WTC11 (cell line): ENCODE measurements at regions of chr1 and their contacts with region 1.

Region 1: DNA sequence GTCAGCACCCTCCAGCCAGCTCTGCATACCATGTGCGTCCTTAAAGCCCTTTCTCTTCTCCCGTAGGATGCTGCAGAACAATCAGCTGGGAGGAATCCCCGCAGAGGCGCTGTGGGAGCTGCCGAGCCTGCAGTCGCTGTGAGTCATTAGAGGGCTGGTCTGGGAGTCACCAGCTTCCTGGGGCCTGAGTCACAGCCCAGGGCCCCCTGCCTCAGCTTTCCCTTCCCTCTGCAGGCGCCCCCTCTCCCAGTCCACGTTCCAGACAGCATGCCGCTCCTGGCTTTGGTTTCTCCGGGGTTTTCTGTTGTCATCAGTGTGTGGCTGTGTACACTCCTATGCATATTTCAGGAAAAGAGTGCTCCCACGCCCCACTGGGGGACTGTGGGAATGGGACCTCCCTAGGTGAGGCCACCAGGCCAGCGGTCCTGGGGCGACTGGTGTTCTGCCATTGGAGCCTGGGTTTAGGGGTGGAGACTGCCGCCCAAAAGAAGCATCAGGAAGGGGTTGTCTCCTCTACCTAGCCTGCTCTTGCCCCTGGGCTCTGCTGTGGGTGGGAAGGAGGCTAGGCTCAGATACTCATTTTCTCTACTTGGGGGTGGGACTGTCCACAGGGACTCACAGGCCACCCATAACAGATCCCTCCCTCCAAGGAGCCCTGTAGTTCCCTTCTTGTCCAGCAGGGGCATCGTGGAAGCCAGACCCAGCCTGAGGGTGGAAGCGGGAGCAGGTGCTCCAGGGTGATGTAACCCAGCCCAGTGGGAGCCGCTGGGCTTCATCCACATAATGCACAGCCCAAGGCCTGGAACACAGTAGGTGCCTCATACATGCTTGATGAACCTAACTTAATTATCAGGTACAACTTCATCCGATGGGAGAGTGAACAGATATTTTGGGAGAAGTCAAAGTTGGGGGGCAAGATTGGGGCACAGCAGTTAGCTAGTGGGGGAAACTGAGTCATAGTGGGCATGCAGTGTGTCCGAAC is 42.5 kb downstream of the LGR6 start:
- DNase-seq: peak; percentile 94
- ATAC-seq: peak; percentile 75
- H3K4me3 Mint-ChIP-seq: no peak overlapping the region
- H3K27ac Mint-ChIP-seq: peak overlapping the region; percentile 78
- H3K4me1 Mint-ChIP-seq: peaks cover 45% of the 10 kb centered on the region
- H3K27me3 Mint-ChIP-seq: 0 out of 2 replicates have a peak, but pooled peaks cover 4% of the 10 kb centered on the region
- CTCF ChIP-seq: peak; percentile 98

Region 2: DNA sequence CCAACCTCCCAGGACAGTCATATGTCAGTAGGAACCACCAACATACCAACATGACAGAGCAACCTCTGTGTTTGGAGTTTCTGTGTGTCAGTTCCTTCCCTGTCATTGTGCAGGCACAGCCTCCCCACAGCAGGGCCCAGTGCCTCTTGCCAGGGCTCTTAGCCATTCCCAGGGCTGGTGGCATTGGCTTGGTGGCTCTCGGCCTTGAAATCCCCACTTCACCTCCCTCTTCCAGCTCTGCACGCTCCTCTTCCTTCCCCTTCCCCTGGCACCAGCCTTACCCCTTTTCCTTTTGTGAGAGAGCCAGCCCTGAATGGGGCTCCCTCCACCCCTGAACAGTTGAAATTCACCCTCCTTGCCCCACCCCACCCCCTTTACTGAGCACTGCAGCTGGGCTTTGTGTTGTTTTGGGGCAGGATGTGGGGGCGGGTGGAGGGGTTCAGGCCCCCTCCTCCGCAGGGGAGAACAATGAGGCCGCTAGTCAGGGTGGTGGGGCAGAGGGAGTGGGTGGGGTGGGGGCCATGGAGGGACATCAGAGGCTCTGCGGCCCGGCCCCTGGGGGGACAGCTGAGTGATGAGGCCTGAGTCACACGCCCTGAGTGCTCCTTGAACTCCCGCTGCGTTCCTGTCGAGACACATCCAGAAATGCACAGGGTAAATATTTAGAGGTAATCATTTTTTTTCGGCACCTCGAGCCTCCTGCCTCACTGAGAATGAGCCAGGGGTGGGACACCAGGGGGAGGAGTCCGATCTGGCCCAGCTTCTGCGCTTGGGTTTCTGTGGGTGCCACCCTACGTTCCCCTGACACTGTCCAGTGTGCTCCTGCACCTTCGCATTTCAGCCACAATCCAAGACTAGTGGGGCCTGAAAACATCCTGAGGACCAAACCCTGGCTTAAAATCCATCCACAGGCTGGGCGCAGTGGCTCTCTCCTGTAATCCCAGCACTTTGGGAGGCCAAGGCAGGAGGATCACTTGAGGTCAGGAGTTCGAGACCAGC is 13.9 kb before region 1 on chr1:
- CTCF ChIA-PET with region 1: interaction called, 76 read pairs
- POLR2A ChIA-PET with region 1: no interaction called
- DNase-seq: no peak
- ATAC-seq: peak; percentile 26
- H3K4me3 Mint-ChIP-seq: no peak overlapping the region; the same call in 1 of the 2 replicates
- H3K27ac Mint-ChIP-seq: no peak overlapping the region
- H3K4me1 Mint-ChIP-seq: peaks cover 13% of the 10 kb centered on the region
- H3K27me3 Mint-ChIP-seq: peaks cover 8% of the 10 kb centered on the region; the same call in 1 of the 2 replicates
- CTCF ChIP-seq: no peak

Region 3: GRCh38 chr1:202247894-202248681 is 11.9 kb after region 1 on chr1:
- CTCF ChIA-PET with region 1: interaction called, 12 read pairs
- POLR2A ChIA-PET with region 1: no interaction called
- DNase-seq: no peak
- ATAC-seq: peak; percentile 82
- H3K4me3 Mint-ChIP-seq: no peak overlapping the region
- H3K27ac Mint-ChIP-seq: no peak overlapping the region
- H3K4me1 Mint-ChIP-seq: peaks cover 11% of the 10 kb centered on the region
- H3K27me3 Mint-ChIP-seq: peaks cover 6% of the 10 kb centered on the region
- CTCF ChIP-seq: no peak